ENCODE measurements at regions of chr2 and their contacts with region 1.

Region 1: GRCh38 chr2:27754138-27754588 is 17.4 kb upstream of the MRPL33 start:
- DNase-seq: peak; percentile 81
- H3K4me3 Mint-ChIP-seq: no peak overlapping the region
- H3K27ac Mint-ChIP-seq: no peak overlapping the region
- H3K4me1 Mint-ChIP-seq: peaks cover 6% of the 10 kb centered on the region
- H3K27me3 Mint-ChIP-seq: peaks cover 6% of the 10 kb centered on the region

Region 2: GRCh38 chr2:27844821-27845255 is 90.7 kb after region 1 on chr2:
- CTCF ChIA-PET with region 1: no interaction called
- POLR2A ChIA-PET with region 1: no interaction called
- DNase-seq: no peak
- H3K4me3 Mint-ChIP-seq: no peak overlapping the region
- H3K27ac Mint-ChIP-seq: no peak overlapping the region
- H3K4me1 Mint-ChIP-seq: no peaks in the 10 kb centered on the region
- H3K27me3 Mint-ChIP-seq: no peaks in the 10 kb centered on the region

Region 3: DNA sequence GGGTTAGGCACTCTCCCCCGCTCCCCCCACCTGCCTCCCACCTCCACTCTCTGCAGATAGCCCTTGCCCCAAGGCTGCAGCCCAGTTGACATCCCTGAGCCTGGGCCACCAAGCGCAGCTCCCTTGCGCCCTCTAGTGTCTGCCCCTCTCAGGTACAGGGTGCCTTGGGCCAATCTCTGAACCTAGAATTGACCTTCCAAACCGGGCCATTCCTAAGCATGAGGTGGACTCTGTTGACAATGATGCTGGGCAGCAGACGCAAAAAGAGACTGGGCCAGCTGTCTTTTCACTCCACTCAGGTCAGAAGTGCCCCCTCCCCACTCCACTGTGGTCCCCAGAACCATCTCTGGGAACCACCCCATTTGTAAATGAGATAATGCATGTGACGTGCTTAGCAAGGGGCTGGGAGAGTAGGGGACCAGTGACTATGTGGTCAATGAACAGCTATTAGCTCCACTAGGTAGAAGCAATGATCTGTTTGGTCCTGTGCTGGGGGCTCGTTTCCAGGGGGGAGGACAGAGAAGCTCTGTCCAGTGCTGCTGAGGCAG is 698.4 kb after region 1 on chr2:
- CTCF ChIA-PET with region 1: interaction called, 12 read pairs
- POLR2A ChIA-PET with region 1: no interaction called
- DNase-seq: peak; percentile 82
- H3K4me3 Mint-ChIP-seq: no peak overlapping the region
- H3K27ac Mint-ChIP-seq: peak overlapping the region; percentile 58
- H3K4me1 Mint-ChIP-seq: peaks cover 36% of the 10 kb centered on the region
- H3K27me3 Mint-ChIP-seq: no peaks in the 10 kb centered on the region

Measured in activated CD4-positive, alpha-beta T cell treated with anti-CD3 and anti-CD28 coated beads, Interleukin-2, amount 10 ng/mL, durations not matched to agents 7 days and 5 days (primary cell).